ENCODE measurements at regions of chr3 and their contacts with region 1.

Region 1: GRCh38 chr3:39499651-39500240 is 32.3 kb downstream of the MOBP start:
- DNase-seq: no peak
- H3K4me3 ChIP-seq: no peak overlapping the region
- H3K27ac ChIP-seq: no peak overlapping the region
- H3K4me1 ChIP-seq: no peaks in the 10 kb centered on the region
- H3K27me3 ChIP-seq: no peaks in the 10 kb centered on the region
- CTCF ChIP-seq: no peak
- POLR2A ChIP-seq: no peak

Region 2: DNA sequence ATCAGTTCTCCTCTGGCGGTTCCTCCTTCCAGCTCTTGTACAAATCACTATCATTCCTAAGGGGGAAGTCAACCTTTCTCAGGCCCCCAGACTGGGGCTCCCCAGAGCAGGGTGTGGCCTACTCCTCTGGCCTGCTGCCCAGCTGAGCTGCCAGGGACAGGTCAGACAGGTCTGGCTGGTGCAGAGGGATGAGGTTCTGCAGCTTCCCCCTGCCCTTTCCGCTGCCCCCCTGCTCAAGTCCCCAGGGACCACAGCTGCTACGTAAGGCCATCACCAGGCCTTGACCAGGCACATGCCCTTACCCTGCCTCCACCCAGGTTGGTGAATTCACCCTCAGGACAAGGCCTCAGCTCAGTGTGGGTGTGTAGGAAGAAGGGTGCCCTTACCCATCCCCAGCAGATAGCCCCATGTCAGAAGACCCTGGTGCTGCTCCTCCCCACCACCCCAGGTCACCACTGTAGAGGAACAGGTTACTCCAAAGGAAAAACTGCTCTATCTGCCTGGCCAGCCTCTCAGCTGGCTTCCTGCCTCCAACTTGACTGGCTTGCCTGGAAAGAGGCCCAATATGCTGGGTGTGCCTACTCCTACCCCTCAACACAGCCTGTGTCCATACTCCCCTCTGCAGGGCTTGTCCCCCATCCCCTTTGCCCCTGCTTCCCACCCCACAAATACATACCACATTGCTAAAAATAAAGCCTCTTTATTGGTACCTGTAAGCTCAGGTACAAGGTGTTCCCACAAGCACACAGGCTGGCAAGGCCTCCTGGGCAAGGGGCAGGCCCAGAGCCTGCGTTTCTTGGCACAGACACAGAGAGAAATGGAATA is 358.4 kb before region 1 on chr3:
- intact Hi-C with region 1: no loop called
- DNase-seq: peak; percentile 95 to 96
- H3K4me3 ChIP-seq: no peak overlapping the region
- H3K27ac ChIP-seq: peak overlapping the region; percentile 89 to 94 (median 92)
- H3K4me1 ChIP-seq: peaks cover 45 to 58% of the 10 kb centered on the region in 2 donors
- H3K27me3 ChIP-seq: no peaks in the 10 kb centered on the region
- CTCF ChIP-seq: no peak
- POLR2A ChIP-seq: peak in 1 of 2 donors; percentile 21

Region 3: DNA sequence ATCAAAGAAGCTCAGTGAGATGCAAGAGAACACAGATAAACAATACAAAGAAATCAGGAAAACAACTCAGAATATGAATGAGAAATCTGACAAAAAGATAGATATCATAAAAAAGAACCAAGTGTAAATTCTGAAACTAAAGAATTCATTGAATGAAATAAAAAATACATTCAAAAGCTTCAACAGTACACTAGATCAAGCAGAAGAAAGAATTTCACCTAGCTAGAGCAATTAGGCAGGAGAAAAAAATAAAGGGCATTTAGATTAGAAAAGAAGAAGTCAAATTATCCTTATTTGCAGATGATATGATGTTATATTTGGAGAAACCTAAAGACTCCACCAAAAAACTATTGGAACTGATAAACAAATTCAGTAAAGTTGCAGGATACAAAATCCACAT is 200.5 kb before region 1 on chr3:
- intact Hi-C with region 1: no loop called
- DNase-seq: no peak
- H3K4me3 ChIP-seq: no peak overlapping the region
- H3K27ac ChIP-seq: no peak overlapping the region
- H3K4me1 ChIP-seq: peaks cover 8 to 11% of the 10 kb centered on the region in 2 donors
- H3K27me3 ChIP-seq: no peaks in the 10 kb centered on the region
- CTCF ChIP-seq: no peak
- POLR2A ChIP-seq: no peak

Region 4: DNA sequence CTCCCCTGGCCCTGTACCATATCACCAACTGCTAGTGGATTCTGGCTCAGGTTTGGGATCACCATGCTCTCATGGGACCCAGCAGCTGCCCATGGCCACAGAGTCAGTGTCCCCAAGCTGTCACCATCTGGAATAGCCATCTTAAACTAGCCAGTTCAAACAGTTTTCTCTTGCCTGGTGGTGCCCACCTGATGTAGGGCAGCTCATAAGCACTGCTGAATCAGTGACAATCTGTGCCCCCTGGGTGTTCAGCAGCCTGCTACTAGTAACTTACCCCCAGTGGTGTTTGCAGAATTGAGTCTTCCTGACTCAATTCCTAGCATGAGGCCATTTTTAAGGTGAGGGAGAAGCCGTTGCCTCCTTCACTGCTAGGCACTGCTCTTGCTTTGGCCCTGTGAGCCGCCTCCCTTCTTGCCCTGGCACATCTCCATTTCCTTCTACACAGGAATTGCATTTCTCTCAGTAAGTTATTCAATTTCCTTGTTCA is 85.3 kb before region 1 on chr3:
- intact Hi-C with region 1: loop called (anchors 5 kb)
- DNase-seq: no peak
- H3K4me3 ChIP-seq: no peak overlapping the region
- H3K27ac ChIP-seq: no peak overlapping the region
- H3K4me1 ChIP-seq: peaks cover 0 to 6% of the 10 kb centered on the region in 2 donors
- H3K27me3 ChIP-seq: no peaks in the 10 kb centered on the region
- CTCF ChIP-seq: no peak
- POLR2A ChIP-seq: no peak

Region 5: DNA sequence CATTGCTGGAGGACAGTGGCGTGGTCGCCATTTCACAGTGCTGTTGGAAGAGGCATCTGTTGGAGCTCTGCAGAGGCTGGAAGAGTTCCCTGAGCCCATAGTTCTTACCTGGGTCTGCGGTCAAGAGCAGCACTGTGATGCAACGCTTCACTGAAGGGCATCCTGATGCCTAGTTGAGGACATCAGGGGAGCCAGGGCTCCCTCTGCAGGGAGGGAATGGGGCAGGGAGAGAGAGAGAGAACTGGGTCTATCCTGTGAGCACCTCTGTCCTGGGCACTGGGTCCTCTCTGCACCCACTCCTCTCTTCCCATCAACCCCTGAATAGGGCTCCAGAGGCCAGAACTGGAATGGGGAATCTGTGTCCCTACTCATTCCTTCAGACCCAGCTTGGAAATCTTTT is 56.2 kb before region 1 on chr3:
- intact Hi-C with region 1: loop called (anchors 5 kb)
- DNase-seq: no peak
- H3K4me3 ChIP-seq: no peak overlapping the region
- H3K27ac ChIP-seq: no peak overlapping the region
- H3K4me1 ChIP-seq: no peaks in the 10 kb centered on the region
- H3K27me3 ChIP-seq: no peaks in the 10 kb centered on the region
- CTCF ChIP-seq: no peak
- POLR2A ChIP-seq: no peak

Region 6: DNA sequence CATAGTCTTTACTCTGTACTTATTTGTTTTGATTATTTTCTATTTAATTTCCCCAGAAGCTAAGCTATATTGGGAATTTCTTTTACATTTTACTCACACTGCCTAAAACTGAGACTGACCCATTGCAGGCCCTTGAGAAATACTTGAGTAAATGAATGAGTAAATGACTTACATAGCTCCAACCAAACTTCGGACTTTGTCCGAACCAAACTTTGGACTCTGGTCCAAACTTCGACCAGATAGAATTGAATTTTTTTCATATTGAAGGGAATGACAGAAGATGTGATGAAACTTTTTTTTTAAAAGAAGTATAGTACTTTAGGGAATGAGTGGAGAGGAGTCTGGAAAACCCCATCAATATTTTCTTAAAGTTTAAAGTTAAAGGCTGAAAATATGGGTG is 234.1 kb after region 1 on chr3:
- intact Hi-C with region 1: no loop called
- DNase-seq: no peak
- H3K4me3 ChIP-seq: no peak overlapping the region
- H3K27ac ChIP-seq: no peak overlapping the region
- H3K4me1 ChIP-seq: no peaks in the 10 kb centered on the region
- H3K27me3 ChIP-seq: no peaks in the 10 kb centered on the region
- CTCF ChIP-seq: no peak
- POLR2A ChIP-seq: no peak